ENCODE measurements at regions of chr7 and their contacts with region 1.

Region 1: DNA sequence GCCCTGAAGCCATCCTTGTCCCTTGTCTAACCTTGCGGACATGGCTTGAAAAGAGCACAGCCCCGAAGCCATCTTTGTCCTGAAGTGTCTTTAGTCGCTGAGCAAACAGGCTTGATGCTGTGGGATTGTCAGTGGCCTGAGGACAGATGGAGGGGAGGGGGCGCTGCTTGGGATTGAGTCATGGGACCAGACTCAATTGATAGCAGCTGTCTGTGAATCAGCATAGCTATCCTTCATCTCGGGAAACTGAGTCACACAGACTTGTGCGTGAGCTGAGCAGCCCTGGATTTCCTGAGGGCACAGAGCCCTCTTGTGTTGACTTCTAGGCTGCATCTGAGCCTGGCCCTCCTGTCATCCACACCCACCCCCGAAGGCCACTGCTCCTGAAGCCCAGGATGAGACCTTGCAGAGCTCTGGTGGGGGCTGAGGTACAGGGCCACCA is 14.4 kb downstream of the MYO1G start:
- DNase-seq: no peak
- ATAC-seq: peak; percentile 45
- H3K4me3 ChIP-seq: peak overlapping the region in 1 of 3 experiments; percentile 9; a peak in 1 of 6 replicates
- H3K27ac ChIP-seq: no peak overlapping the region
- H3K4me1 ChIP-seq: peaks cover 26% of the 10 kb centered on the region
- H3K27me3 ChIP-seq: peaks cover 1 to 11% of the 10 kb centered on the region in 2 experiments; a peak in 2 of 5 replicates
- CTCF ChIP-seq: peak; percentile 59
- EP300 ChIP-seq: no peak
- POLR2A ChIP-seq: no peak
- RAD21 ChIP-seq: no peak

Region 2: GRCh38 chr7:44685723-44686122 is 278.7 kb before region 1 on chr7:
- CTCF ChIA-PET with region 1: no interaction called
- POLR2A ChIA-PET with region 1: no interaction called
- in situ Hi-C with region 1: no loop called
- intact Hi-C with region 1: no loop called
- DNase-seq: no peak
- ATAC-seq: no peak
- H3K4me3 ChIP-seq: no peak overlapping the region
- H3K27ac ChIP-seq: no peak overlapping the region
- H3K4me1 ChIP-seq: no peaks in the 10 kb centered on the region
- H3K27me3 ChIP-seq: no peaks in the 10 kb centered on the region
- CTCF ChIP-seq: no peak
- EP300 ChIP-seq: no peak
- POLR2A ChIP-seq: no peak
- RAD21 ChIP-seq: no peak

Region 3: DNA sequence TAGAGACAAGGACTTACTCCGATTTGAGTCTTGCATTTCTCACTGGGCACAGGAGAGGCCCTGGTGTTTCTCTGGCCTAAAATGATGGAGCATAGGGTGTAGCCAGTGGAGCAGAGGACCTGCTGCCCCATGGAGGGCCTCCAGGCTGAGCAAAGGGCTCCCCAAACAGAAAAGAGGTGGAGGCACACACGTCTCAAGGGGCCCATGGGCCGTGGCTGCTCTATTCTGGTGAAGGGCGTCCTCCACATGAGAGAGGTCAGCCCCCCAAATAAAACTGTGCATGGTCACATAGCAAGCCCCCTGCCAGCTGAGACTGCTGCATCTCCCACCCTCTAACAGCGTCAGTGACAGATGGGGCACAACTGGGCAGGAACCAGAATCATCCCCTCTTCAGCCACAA is 27.0 kb before region 1 on chr7:
- CTCF ChIA-PET with region 1: no interaction called
- POLR2A ChIA-PET with region 1: no interaction called
- in situ Hi-C with region 1: no loop called
- intact Hi-C with region 1: loop called (anchors 1 kb)
- DNase-seq: no peak
- ATAC-seq: no peak
- H3K4me3 ChIP-seq: no peak overlapping the region
- H3K27ac ChIP-seq: no peak overlapping the region
- H3K4me1 ChIP-seq: no peaks in the 10 kb centered on the region
- H3K27me3 ChIP-seq: peaks cover 0 to 11% of the 10 kb centered on the region in 2 experiments; a peak in 1 of 5 replicates
- CTCF ChIP-seq: no peak
- EP300 ChIP-seq: no peak
- POLR2A ChIP-seq: no peak
- RAD21 ChIP-seq: no peak